ENCODE measurements at regions of chr14 and their contacts with region 1.

Region 1: GRCh38 chr14:92551044-92551841 is 37.7 kb downstream of the RIN3 start:
- DNase-seq: no peak
- H3K4me3 Mint-ChIP-seq: no peak overlapping the region
- H3K27ac Mint-ChIP-seq: no peak overlapping the region
- H3K4me1 Mint-ChIP-seq: peaks cover 24% of the 10 kb centered on the region
- H3K27me3 Mint-ChIP-seq: peaks cover 4% of the 10 kb centered on the region

Region 2: DNA sequence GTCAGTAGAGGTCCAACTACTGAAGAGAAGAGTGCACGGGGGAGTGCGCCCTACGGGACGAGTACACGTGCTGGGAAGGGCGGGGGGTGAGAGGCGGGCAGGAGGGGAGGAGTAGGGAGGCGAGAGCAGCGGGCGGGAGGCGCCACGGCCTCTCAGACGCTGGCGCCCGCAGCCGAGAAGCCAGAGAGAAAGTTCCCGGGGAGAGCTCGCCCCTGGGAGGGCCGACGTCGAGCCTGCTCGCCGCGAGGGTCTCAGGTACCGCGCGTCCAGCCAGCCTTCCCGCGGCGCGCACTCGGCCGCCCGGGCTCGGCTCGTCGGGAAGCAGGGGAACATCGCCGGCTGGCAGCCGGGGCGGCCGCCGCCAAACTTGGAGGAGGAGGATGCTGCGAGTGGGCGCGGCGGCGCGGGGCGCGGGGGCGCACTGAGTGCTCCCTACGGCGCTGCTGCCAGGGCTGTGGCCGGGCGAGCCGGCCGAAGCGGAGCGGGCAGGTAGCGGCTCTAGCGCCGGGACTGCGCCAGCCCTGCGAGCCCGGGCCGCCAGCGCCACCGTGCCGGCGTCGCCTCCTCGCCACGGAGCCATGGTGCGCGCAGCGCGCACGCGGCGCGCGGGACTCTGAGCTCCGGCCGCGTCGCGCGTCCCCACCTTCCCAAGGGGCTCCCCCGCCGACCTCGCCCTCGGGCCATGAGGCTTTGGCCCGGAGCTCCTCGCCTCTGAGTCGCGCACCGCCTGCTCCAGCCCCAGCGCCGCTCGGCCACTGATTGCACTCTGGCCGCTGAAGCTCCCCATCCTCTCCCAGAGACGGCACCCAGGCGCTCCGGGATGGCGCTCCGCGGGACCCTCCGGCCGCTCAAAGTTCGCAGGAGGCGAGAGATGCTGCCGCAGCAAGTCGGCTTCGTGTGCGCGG is 228.0 kb before region 1 on chr14 and contains the start of gene SLC24A4:
- CTCF ChIA-PET with region 1: no interaction called
- POLR2A ChIA-PET with region 1: no interaction called
- intact Hi-C with region 1: no loop called
- DNase-seq: no peak
- H3K4me3 Mint-ChIP-seq: peak within 1 kb of the TSS; percentile 25
- H3K27ac Mint-ChIP-seq: no peak within 1 kb of the TSS
- H3K4me1 Mint-ChIP-seq: peaks cover 6% of the 10 kb centered on the region
- H3K27me3 Mint-ChIP-seq: peaks cover 53% of the 10 kb centered on the region
- total RNA-seq, gene SLC24A4: not detected

Region 3: GRCh38 chr14:92563359-92563758 is 12.1 kb after region 1 on chr14:
- CTCF ChIA-PET with region 1: interaction called, 3 read pairs
- POLR2A ChIA-PET with region 1: no interaction called
- intact Hi-C with region 1: loop called (anchors 1 kb)
- DNase-seq: peak; percentile 33
- H3K4me3 Mint-ChIP-seq: no peak overlapping the region
- H3K27ac Mint-ChIP-seq: no peak overlapping the region
- H3K4me1 Mint-ChIP-seq: peaks cover 23% of the 10 kb centered on the region
- H3K27me3 Mint-ChIP-seq: no peaks in the 10 kb centered on the region

Measured in activated CD4-positive, alpha-beta memory T cell treated with anti-CD3 and anti-CD28 coated beads for 36 hours (primary cell).